ENCODE measurements at regions of chr6 and their contacts with region 1.

Region 1: GRCh38 chr6:52399511-52400312 is 20.4 kb upstream of the EFHC1 start:
- H3K4me3 ChIP-seq: no peak overlapping the region
- H3K27ac ChIP-seq: no peak overlapping the region
- H3K4me1 ChIP-seq: no peaks in the 10 kb centered on the region
- CTCF ChIP-seq: peak; percentile 68

Region 2: DNA sequence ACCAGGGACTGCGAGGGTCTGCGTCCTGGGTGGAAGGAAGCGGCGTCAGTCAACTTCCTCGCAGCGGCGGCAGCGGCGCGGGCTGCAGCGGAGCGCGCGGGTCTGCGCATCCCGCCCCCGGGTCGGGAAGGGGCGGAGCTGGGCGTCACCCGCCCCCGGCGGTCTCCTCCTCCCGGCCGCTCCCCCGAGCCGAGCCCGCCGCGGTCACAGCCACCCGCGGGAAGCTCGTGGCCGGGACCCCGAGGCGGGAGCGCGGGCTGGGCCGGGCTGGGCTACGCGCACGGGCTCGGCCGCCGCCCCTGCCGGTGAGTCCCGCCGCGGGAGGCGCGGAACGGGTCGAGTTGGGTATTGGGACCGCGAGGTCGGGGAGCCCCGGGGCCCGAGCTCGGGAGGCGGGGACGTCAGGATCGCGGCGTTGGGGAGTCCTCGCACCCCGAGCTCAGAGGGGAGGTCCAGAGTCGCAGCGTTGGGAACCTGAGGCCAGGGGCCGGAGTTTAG is 37.7 kb before region 1 on chr6 and contains the start of gene PAQR8:
- CTCF ChIA-PET with region 1: interaction called, 14 read pairs
- POLR2A ChIA-PET with region 1: interaction called, 4 read pairs
- H3K4me3 ChIP-seq: peak within 1 kb of the TSS; percentile 81
- H3K27ac ChIP-seq: peak within 1 kb of the TSS; percentile 82
- H3K4me1 ChIP-seq: peaks cover 4% of the 10 kb centered on the region
- CTCF ChIP-seq: no peak

Region 3: DNA sequence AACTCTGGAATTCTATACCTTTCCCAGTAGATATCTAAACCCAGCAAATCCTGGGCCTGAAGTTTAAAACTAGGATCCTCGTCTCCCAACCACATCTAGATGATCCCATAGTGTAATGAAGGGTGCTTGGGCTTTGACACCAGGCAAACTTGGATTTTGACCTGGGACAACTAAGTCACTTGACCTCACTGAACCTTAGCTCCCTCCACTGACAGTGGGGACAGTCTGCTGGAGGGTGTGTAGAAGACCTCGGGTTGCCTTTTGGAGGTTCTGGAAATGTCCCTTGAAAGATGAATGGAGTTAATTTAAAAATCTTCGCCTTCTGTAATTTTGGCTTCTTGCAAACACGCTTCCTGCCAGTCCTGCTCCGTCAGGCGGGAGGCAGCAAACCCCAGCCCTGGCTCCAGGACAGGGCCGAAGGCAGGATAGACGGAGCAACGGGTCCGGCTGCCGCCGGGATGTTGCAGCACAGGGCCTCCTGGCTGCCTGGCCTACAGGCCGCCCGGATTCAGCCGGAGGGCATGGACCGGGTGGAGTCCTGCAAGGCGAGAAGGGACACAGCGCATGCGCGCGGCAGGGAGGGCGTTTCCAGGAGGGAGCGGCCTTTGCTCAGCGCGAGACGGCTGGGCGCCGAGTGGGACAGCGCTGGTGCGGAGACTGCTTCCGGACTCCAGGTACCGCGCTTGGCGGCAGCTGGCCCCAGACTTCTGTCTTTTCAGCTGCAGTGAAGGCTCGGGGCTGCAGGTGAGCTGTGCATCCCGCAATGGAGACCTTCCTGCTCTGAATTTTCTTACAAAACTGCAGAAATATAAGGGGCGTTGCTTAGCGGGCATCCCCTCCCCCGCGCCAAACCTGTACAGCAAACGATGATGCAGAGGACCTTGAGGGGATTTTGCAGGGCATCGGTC is 271.0 kb after region 1 on chr6 and contains the start of gene TMEM14A:
- CTCF ChIA-PET with region 1: interaction called, 4 read pairs
- POLR2A ChIA-PET with region 1: interaction called, 11 read pairs
- H3K4me3 ChIP-seq: peak within 1 kb of the TSS; percentile 65
- H3K27ac ChIP-seq: peak within 1 kb of the TSS; percentile 4; the same call in 1 of the 2 replicates
- H3K4me1 ChIP-seq: peaks cover 2% of the 10 kb centered on the region; the same call in 1 of the 2 replicates
- CTCF ChIP-seq: no peak